ENCODE measurements at regions of chr1 and their contacts with region 1.

Region 1: DNA sequence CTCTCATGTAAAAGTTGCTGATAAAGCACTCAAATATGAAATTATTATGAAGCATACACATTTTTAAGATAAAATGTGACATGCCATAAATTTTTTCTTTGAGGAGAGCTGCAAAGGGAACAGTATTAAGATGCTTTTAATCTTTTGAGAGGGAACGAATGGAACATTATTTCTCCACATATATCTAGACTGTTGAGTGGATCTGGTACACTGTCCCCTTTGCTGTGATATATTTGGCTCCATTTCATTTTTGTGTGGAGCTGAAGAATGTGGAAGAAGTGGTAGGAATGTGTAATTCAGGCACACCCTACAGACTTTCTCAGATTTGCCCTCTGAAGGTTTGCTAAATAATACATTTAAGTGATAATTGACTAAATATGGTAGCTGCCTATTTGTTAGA is 31.7 kb downstream of the PGM1 start:
- DNase-seq: no peak
- ATAC-seq: peak; percentile 57; the same call in 1 of the 2 replicates
- H3K4me3 ChIP-seq: no peak overlapping the region
- H3K27ac ChIP-seq: no peak overlapping the region
- H3K4me1 ChIP-seq: peaks cover 0 to 30% of the 10 kb centered on the region in 2 experiments; a peak in 3 of 4 replicates
- H3K27me3 ChIP-seq: no peaks in the 10 kb centered on the region
- CTCF ChIP-seq: peak in 2 of 3 experiments; percentile 16 to 39; a peak in 2 of 6 replicates
- POLR2A ChIP-seq: no peak
- RAD21 ChIP-seq: no peak

Region 2: GRCh38 chr1:63713627-63714481 is 88.9 kb after region 1 on chr1:
- CTCF ChIA-PET with region 1: no interaction called
- POLR2A ChIA-PET with region 1: no interaction called
- RAD21 ChIA-PET with region 1: no interaction called
- intact Hi-C with region 1: no loop called
- DNase-seq: peak; percentile 57
- ATAC-seq: peak; percentile 94
- H3K4me3 ChIP-seq: no peak overlapping the region
- H3K27ac ChIP-seq: no peak overlapping the region
- H3K4me1 ChIP-seq: peaks cover 7 to 16% of the 10 kb centered on the region in 2 experiments
- H3K27me3 ChIP-seq: peaks cover 18% of the 10 kb centered on the region
- CTCF ChIP-seq: no peak
- POLR2A ChIP-seq: no peak
- RAD21 ChIP-seq: no peak

Region 3: DNA sequence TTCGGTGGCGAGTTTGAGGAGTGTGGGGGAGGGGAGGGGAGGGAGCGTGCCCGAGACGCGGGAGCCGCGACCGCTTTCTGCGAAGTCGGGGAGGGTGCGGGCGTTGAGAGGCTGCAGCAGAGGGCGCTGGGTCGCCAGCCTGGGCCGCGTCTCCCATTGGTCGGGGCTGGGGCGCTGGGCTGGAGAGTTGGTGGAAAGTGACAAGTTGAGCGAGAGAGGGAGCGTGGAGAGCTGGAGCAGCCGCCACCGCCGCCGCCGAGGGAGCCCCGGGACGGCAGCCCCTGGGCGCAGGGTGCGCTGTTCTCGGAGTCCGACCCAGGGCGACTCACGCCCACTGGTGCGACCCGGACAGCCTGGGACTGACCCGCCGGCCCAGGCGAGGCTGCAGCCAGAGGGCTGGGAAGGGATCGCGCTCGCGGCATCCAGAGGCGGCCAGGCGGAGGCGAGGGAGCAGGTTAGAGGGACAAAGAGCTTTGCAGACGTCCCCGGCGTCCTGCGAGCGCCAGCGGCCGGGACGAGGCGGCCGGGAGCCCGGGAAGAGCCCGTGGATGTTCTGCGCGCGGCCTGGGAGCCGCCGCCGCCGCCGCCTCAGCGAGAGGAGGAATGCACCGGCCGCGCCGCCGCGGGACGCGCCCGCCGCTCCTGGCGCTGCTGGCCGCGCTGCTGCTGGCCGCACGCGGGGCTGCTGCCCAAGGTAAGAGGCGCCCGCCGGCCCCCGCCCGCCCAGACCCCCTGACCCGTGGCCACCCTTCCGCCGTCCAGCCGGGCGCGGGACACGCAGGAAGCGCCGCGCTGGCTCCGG is 149.1 kb after region 1 on chr1 and contains the start of gene ROR1:
- CTCF ChIA-PET with region 1: no interaction called
- POLR2A ChIA-PET with region 1: no interaction called
- RAD21 ChIA-PET with region 1: no interaction called
- intact Hi-C with region 1: loop called (anchors 10 kb)
- DNase-seq: peak; percentile 72
- ATAC-seq: peak; percentile 95
- H3K4me3 ChIP-seq: peak within 1 kb of the TSS; percentile 58 to 70
- H3K27ac ChIP-seq: no peak within 1 kb of the TSS; the same call in 1 of the 2 replicates
- H3K4me1 ChIP-seq: peaks cover 11 to 24% of the 10 kb centered on the region in 2 experiments; a peak in 3 of 4 replicates
- H3K27me3 ChIP-seq: no peaks in the 10 kb centered on the region
- CTCF ChIP-seq: peak; percentile 52 to 67 (median 67)
- POLR2A ChIP-seq: no peak
- RAD21 ChIP-seq: peak; percentile 76
- total RNA-seq, gene ROR1: 2.7 TPM

Region 4: DNA sequence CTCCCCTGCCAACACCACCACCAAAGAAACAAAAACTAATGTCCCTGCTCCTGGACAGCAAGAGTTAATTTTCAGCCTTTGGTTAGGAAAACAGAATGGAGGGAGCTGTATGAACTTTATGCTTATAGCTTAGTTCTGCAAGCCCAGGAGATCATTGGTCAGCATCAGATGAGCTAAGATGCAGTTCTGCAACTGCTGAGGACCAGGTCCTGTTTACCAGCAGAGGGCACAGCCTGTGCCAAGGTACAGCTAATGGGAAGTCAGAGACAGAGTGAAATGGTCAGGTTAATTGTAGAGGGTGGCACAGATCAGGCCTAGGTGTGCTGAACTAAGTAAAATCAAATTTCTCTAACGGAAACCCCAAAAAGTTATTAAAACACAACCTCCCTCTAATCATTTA is 310.2 kb after region 1 on chr1:
- CTCF ChIA-PET with region 1: no interaction called
- POLR2A ChIA-PET with region 1: no interaction called
- RAD21 ChIA-PET with region 1: no interaction called
- intact Hi-C with region 1: no loop called
- DNase-seq: no peak
- ATAC-seq: peak; percentile 74
- H3K4me3 ChIP-seq: no peak overlapping the region
- H3K27ac ChIP-seq: no peak overlapping the region
- H3K4me1 ChIP-seq: no peaks in the 10 kb centered on the region
- H3K27me3 ChIP-seq: no peaks in the 10 kb centered on the region
- CTCF ChIP-seq: peak; percentile 39 to 48 (median 40); a peak in 4 of 6 replicates
- POLR2A ChIP-seq: no peak
- RAD21 ChIP-seq: peak; percentile 65

Region 5: DNA sequence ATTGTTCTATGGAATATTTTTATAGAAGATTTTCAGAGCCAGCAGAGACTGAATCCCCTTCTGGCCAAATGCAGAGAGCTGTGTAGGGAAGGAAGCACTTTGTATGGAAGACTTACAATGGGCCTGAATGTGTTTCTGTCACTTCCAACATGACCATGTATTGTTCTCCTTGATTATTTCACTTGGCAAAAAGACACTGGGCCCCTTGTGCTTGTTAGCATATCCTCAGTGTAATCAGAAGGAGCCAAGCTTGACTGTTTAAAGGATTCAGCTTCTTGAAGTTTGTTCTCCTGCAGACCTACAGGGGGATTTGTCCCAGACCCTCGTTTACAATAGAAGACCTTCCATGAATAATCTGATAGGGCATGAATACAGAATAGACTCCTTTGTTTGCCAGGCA is 530.4 kb after region 1 on chr1:
- CTCF ChIA-PET with region 1: no interaction called
- POLR2A ChIA-PET with region 1: no interaction called
- RAD21 ChIA-PET with region 1: no interaction called
- intact Hi-C with region 1: no loop called
- DNase-seq: no peak
- ATAC-seq: no peak
- H3K4me3 ChIP-seq: no peak overlapping the region
- H3K27ac ChIP-seq: no peak overlapping the region
- H3K4me1 ChIP-seq: no peaks in the 10 kb centered on the region
- H3K27me3 ChIP-seq: no peaks in the 10 kb centered on the region
- CTCF ChIP-seq: no peak
- POLR2A ChIP-seq: no peak
- RAD21 ChIP-seq: no peak

Measured in HCT116 (cell line).